Naive thymus-derived CD4-positive, alpha-beta T cell (primary cell): ENCODE measurements at regions of chr3 and their contacts with region 1.

Region 1: DNA sequence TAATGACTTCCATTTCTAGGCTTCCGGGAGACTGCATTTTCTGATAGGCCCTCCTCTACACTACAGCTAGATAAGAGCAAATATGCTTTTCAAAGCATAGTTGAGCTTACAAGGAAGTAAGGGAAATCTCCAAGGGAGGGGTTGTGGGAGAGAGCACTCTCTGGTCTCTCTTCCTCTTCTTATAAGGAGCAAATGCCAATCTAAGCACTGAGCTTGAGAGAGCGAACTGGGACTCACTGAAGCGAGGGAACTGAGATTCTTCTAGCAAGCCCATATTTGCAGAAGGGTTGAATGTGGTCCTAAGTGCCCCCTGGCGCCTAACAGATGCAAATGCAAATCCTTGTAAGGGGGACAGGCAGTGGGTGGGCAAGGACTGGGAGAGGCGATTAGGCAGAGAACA is 164.8 kb downstream of the ERC2 start:
- DNase-seq: no peak
- ATAC-seq: no peak
- H3K4me3 ChIP-seq: no peak overlapping the region
- H3K4me3 Mint-ChIP-seq: no peak overlapping the region
- H3K27ac ChIP-seq: no peak overlapping the region
- H3K27ac Mint-ChIP-seq: no peak overlapping the region
- H3K4me1 ChIP-seq: no peaks in the 10 kb centered on the region
- H3K4me1 Mint-ChIP-seq: peaks cover 0 to 5% (median 0%) of the 10 kb centered on the region in 7 donors
- H3K27me3 ChIP-seq: peaks cover 0 to 4% of the 10 kb centered on the region in 2 donors
- H3K27me3 Mint-ChIP-seq: peaks cover 9 to 35% (median 30%) of the 10 kb centered on the region in 5 donors

Region 2: DNA sequence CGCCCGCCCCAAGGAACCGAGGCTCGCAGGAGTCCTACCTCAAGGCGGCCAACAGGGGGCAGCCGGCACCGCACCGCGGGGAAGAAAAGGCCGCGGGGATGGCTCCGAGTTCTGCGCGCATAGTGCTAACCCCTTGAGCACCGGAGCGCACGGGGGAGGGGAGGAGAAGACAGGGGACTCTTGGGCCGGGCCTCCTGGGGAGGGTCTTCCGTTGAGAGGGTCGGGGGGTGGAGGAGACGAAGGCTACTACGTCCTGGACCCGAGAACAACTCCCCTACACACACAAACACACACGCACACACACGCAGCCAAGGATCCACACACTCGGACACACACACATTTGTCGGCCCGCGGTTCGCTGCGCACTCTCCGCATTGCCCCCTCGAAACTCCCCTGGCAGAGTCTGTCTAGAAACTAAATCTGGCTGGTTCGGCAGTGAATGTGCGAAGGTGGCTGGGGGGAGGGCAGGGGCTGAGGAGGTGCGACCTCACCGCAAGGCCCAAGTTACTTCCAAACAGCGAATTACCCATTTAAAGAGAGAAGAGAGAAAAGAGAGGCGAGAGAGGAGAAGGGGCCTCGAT is 818.2 kb before region 1 on chr3:
- CTCF ChIA-PET with region 1: no interaction called
- POLR2A ChIA-PET with region 1: no interaction called
- intact Hi-C with region 1: loop called in 1 of 2 experiments (anchors 5 kb)
- DNase-seq: peak in 2 of 9 donors; percentile 19 to 52
- ATAC-seq: peak; percentile 40
- H3K4me3 ChIP-seq: no peak overlapping the region
- H3K4me3 Mint-ChIP-seq: peak overlapping the region in 7 of 10 donors; percentile 16 to 60 (median 42)
- H3K27ac ChIP-seq: no peak overlapping the region
- H3K27ac Mint-ChIP-seq: peak overlapping the region in 1 of 9 donors; percentile 65
- H3K4me1 ChIP-seq: no peaks in the 10 kb centered on the region
- H3K4me1 Mint-ChIP-seq: peaks cover 0 to 51% (median 26%) of the 10 kb centered on the region in 7 donors
- H3K27me3 ChIP-seq: peaks cover 0 to 7% of the 10 kb centered on the region in 2 donors
- H3K27me3 Mint-ChIP-seq: peaks cover 61 to 90% (median 79%) of the 10 kb centered on the region in 5 donors

Region 3: GRCh38 chr3:56125358-56126005 is 178.0 kb before region 1 on chr3:
- CTCF ChIA-PET with region 1: no interaction called
- POLR2A ChIA-PET with region 1: no interaction called
- intact Hi-C with region 1: no loop called
- DNase-seq: no peak
- ATAC-seq: no peak
- H3K4me3 ChIP-seq: no peak overlapping the region
- H3K4me3 Mint-ChIP-seq: no peak overlapping the region
- H3K27ac ChIP-seq: no peak overlapping the region
- H3K27ac Mint-ChIP-seq: no peak overlapping the region
- H3K4me1 ChIP-seq: no peaks in the 10 kb centered on the region
- H3K4me1 Mint-ChIP-seq: no peaks in the 10 kb centered on the region
- H3K27me3 ChIP-seq: no peaks in the 10 kb centered on the region
- H3K27me3 Mint-ChIP-seq: peaks cover 0 to 16% (median 10%) of the 10 kb centered on the region in 5 donors